ENCODE measurements at regions of chr22 and their contacts with region 1.

Region 1: DNA sequence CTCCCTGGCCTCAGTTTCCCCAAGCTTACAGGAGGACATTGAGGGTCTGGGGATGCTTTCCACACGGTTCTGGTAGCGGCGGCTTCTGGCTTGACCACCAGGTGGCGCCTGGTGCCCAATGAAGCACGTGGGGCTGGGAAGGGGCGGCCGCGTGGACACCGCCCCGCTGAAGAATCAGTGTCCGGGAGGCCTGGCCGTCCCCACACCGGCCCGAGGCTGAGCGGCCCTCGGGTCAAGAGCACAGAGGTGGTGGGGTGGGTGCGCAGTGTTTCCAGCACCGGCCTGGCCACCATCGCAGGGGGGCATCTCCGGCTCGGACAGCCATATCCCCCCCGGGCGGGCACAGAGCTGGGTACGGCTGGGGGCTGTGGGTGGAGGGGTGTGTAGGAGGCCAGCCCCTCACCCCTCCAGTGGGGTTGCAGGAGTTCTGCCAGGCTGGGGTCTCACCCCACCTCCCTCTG is 27.8 kb upstream of the PPARA start:
- DNase-seq: peak; percentile 49 to 78 (median 61)
- H3K4me3 ChIP-seq: no peak overlapping the region
- H3K4me3 Mint-ChIP-seq: no peak overlapping the region
- H3K27ac ChIP-seq: no peak overlapping the region
- H3K27ac Mint-ChIP-seq: peak overlapping the region in 1 of 8 donors; percentile 65
- H3K4me1 ChIP-seq: no peaks in the 10 kb centered on the region
- H3K4me1 Mint-ChIP-seq: no peaks in the 10 kb centered on the region
- H3K27me3 ChIP-seq: no peaks in the 10 kb centered on the region
- H3K27me3 Mint-ChIP-seq: no peaks in the 10 kb centered on the region

Region 2: GRCh38 chr22:46057762-46058420 is 64.7 kb before region 1 on chr22:
- CTCF ChIA-PET with region 1: no interaction called
- POLR2A ChIA-PET with region 1: no interaction called
- DNase-seq: peak in 2 of 5 donors; percentile 27 to 45
- H3K4me3 ChIP-seq: peak overlapping the region; percentile 5
- H3K4me3 Mint-ChIP-seq: peak overlapping the region in 6 of 7 donors; percentile 4 to 76 (median 34)
- H3K27ac ChIP-seq: peak overlapping the region; percentile 44
- H3K27ac Mint-ChIP-seq: peak overlapping the region; percentile 8 to 93 (median 76)
- H3K4me1 ChIP-seq: peaks cover 36% of the 10 kb centered on the region
- H3K4me1 Mint-ChIP-seq: peaks cover 36 to 63% (median 44%) of the 10 kb centered on the region in 3 donors
- H3K27me3 ChIP-seq: no peaks in the 10 kb centered on the region
- H3K27me3 Mint-ChIP-seq: peaks cover 6 to 9% of the 10 kb centered on the region in 2 donors

Region 3: DNA sequence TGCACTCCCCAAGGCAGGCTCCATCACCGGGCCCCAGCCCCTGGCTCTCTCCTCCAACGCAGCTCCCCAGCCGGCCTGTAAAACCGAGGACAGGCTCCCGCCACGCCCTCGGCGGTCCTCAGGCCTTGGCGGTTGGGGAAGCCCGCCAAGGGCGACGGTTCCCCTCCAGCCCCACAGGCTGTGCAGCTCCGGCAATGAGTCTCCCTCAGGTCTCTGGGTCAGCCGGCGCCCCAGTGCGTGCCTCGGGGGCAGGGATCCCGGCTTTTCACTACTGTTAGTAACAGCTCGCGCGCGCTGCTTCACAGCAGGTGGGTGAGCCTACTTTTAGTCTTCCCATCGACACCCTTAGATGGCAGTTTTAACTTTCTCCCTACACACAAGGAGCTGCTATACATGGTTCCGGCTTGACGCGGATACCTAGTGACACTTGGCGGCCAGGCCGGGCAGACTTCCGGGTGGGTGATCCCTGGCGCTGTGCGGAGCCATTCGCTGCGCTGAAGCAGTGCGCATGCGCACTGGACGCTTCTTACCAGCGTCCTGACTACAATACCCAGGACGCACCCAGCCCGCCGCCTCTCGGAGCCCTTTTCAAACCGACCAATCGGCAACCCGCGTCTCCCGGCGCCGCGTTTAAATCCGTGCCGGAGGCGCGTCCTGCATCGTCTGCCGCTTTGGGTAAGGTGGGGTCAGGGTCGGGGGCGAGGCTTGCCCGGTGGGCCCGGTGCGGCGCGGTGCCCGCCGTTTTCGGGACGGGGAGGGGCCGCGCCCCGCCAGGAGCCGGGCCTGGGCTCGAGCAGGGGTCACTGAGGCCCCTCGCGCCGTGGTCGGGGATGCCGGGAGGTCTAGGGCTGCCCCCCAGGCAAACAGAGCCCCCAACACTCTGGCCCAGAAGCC is 174.0 kb after region 1 on chr22 and contains the start of gene GTSE1:
- CTCF ChIA-PET with region 1: interaction called, 30 read pairs
- POLR2A ChIA-PET with region 1: no interaction called
- DNase-seq: peak; percentile 95 to 99 (median 96)
- H3K4me3 ChIP-seq: peak within 1 kb of the TSS; percentile 85
- H3K4me3 Mint-ChIP-seq: peak within 1 kb of the TSS; percentile 83 to 97 (median 88)
- H3K27ac ChIP-seq: peak within 1 kb of the TSS; percentile 90
- H3K27ac Mint-ChIP-seq: peak within 1 kb of the TSS; percentile 88 to 100 (median 96)
- H3K4me1 ChIP-seq: peaks cover 20% of the 10 kb centered on the region
- H3K4me1 Mint-ChIP-seq: peaks cover 23 to 30% (median 29%) of the 10 kb centered on the region in 3 donors
- H3K27me3 ChIP-seq: no peaks in the 10 kb centered on the region
- H3K27me3 Mint-ChIP-seq: peaks cover 0 to 4% of the 10 kb centered on the region in 2 donors
- total RNA-seq, gene GTSE1: 27.4 to 30.9 TPM

Region 4: GRCh38 chr22:46309526-46310085 is 187.1 kb after region 1 on chr22:
- CTCF ChIA-PET with region 1: interaction called, 78 read pairs
- POLR2A ChIA-PET with region 1: no interaction called
- DNase-seq: peak in 1 of 5 donors; percentile 8
- H3K4me3 ChIP-seq: no peak overlapping the region
- H3K4me3 Mint-ChIP-seq: no peak overlapping the region
- H3K27ac ChIP-seq: no peak overlapping the region
- H3K27ac Mint-ChIP-seq: no peak overlapping the region
- H3K4me1 ChIP-seq: no peaks in the 10 kb centered on the region
- H3K4me1 Mint-ChIP-seq: no peaks in the 10 kb centered on the region
- H3K27me3 ChIP-seq: no peaks in the 10 kb centered on the region
- H3K27me3 Mint-ChIP-seq: peaks cover 0 to 4% of the 10 kb centered on the region in 2 donors

Region 5: DNA sequence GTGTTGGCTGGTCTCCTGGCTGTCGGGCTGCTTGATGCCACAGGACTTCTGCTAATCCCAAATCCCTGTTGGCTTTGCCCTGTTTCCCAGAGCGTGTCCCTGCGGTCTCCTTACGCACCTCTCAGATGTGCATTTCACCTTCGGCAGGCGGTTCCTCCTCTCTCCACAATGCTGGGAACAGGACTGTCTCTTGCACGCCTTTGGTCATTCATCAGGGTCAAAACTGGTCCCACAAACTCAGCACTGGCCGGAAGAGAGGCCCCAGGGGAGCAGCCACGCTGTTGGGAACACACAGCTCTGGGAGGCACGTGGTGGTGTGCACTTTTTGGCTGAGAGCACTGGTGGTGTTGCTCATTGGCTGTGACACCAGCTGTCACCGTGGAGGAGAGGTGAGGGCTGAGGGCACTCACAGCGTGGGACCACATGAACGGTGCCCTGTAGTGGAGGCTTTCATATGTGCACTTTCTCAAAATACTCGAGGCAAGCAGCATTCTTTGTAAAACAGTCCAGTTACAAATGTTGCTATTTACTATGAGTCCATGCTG is 197.7 kb after region 1 on chr22:
- CTCF ChIA-PET with region 1: interaction called, 78 read pairs
- POLR2A ChIA-PET with region 1: no interaction called
- DNase-seq: no peak
- H3K4me3 ChIP-seq: no peak overlapping the region
- H3K4me3 Mint-ChIP-seq: no peak overlapping the region
- H3K27ac ChIP-seq: no peak overlapping the region
- H3K27ac Mint-ChIP-seq: peak overlapping the region in 1 of 8 donors; percentile 58
- H3K4me1 ChIP-seq: no peaks in the 10 kb centered on the region
- H3K4me1 Mint-ChIP-seq: no peaks in the 10 kb centered on the region
- H3K27me3 ChIP-seq: no peaks in the 10 kb centered on the region
- H3K27me3 Mint-ChIP-seq: peaks cover 0 to 1% of the 10 kb centered on the region in 2 donors

Region 6: DNA sequence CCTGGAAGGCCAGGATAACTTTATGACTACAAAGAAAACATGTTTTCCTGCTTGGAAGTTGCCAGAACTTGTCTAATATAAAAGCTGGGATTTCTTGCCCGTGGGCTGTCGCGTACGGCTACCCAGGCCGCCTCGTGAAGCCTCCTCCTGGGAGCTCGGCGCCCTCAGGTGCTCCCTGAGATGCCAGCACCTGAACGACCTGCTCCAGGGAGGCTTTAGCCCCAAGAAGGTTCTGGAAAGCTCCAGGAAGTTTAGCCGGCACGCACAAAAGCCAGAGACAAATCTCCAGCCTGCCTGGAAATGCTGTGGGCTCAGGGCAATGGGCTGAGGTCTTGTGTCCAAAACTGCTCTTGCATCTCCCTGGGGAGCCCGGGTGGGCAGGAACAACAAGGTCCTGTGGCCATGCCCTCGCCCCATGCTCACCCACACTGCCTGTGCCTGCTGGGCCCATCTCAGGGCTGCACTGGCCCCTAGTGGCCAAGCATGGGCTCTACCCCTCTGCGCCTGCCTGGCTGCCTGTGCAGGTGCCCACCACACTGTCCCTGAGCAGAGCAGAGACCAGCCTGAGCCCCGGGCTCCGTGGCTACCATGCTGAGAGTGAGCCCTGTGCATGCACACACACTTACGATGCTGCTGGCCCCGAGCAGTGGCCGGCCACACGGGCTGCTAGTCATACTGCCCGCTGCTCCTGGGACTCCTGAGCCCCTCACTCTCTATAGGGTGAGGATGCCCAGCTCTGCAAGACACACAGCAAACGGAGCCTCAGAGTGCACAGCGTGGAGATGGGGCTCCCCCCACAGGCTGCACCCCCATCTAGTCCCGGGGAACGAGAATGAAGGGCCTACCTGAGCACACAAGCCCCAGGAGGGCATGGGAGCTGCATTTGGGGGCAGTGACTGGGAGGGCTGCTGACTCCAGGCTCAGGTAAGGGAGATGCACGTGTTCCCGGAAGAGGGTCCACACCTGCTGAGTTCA is 419.8 kb after region 1 on chr22:
- CTCF ChIA-PET with region 1: interaction called, 13 read pairs
- POLR2A ChIA-PET with region 1: no interaction called
- DNase-seq: peak; percentile 59 to 80 (median 69)
- H3K4me3 ChIP-seq: no peak overlapping the region
- H3K4me3 Mint-ChIP-seq: peak overlapping the region in 1 of 7 donors; percentile 61
- H3K27ac ChIP-seq: no peak overlapping the region
- H3K27ac Mint-ChIP-seq: no peak overlapping the region
- H3K4me1 ChIP-seq: no peaks in the 10 kb centered on the region
- H3K4me1 Mint-ChIP-seq: peaks cover 8 to 12% (median 12%) of the 10 kb centered on the region in 3 donors
- H3K27me3 ChIP-seq: peaks cover 13% of the 10 kb centered on the region
- H3K27me3 Mint-ChIP-seq: peaks cover 29 to 46% of the 10 kb centered on the region in 2 donors